ENCODE measurements at regions of chr11 and their contacts with region 1.

Region 1: GRCh38 chr11:102451681-102452460 is 694 bp downstream of the TMEM123 start:
- DNase-seq: peak; percentile 58
- H3K4me3 ChIP-seq: peak overlapping the region; percentile 86 to 92 (median 88)
- H3K27ac ChIP-seq: peak overlapping the region; percentile 75
- H3K4me1 ChIP-seq: peaks cover 44% of the 10 kb centered on the region
- H3K27me3 ChIP-seq: no peaks in the 10 kb centered on the region
- CTCF ChIP-seq: peak; percentile 3 to 25

Region 2: GRCh38 chr11:102332611-102332994 is 119.3 kb before region 1 on chr11:
- CTCF ChIA-PET with region 1: no interaction called
- dilution Hi-C with region 1: no loop called
- in situ Hi-C with region 1: no loop called
- intact Hi-C with region 1: no loop called
- DNase-seq: no peak
- H3K4me3 ChIP-seq: no peak overlapping the region
- H3K27ac ChIP-seq: no peak overlapping the region
- H3K4me1 ChIP-seq: peaks cover 5% of the 10 kb centered on the region
- H3K27me3 ChIP-seq: no peaks in the 10 kb centered on the region
- CTCF ChIP-seq: no peak

Region 3: DNA sequence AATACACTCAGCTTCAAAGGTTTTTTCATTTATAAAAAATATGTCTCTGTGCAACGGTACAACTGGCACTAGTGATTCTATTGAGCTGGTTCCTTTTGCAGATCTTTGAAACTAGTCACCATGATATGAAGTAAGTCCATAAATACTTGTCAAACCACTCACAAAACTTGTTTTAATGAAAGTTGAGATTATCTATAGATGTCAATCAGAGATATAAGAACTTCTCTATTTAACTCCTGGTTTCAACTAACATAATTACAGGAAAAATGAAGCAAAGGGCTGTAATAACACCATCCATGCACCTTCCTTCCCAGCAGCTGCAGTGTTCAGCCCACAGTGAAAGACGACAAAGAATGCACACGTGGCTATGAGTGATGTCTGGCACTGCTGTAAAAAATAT is 44.0 kb before region 1 on chr11:
- CTCF ChIA-PET with region 1: no interaction called
- dilution Hi-C with region 1: no loop called
- in situ Hi-C with region 1: no loop called
- intact Hi-C with region 1: loop called (anchors 5 kb)
- DNase-seq: no peak
- H3K4me3 ChIP-seq: no peak overlapping the region
- H3K27ac ChIP-seq: no peak overlapping the region
- H3K4me1 ChIP-seq: peaks cover 4% of the 10 kb centered on the region
- H3K27me3 ChIP-seq: no peaks in the 10 kb centered on the region
- CTCF ChIP-seq: no peak

Region 4: GRCh38 chr11:102488208-102488607 is 36.3 kb after region 1 on chr11:
- CTCF ChIA-PET with region 1: no interaction called
- dilution Hi-C with region 1: no loop called
- in situ Hi-C with region 1: no loop called
- intact Hi-C with region 1: no loop called
- DNase-seq: no peak
- H3K4me3 ChIP-seq: no peak overlapping the region
- H3K27ac ChIP-seq: no peak overlapping the region
- H3K4me1 ChIP-seq: no peaks in the 10 kb centered on the region
- H3K27me3 ChIP-seq: no peaks in the 10 kb centered on the region
- CTCF ChIP-seq: no peak